ENCODE measurements at regions of chr4 and their contacts with region 1.

Region 1: GRCh38 chr4:26719954-26720552 is 136.2 kb downstream of the TBC1D19 start:
- DNase-seq: no peak
- H3K4me3 Mint-ChIP-seq: no peak overlapping the region
- H3K27ac Mint-ChIP-seq: no peak overlapping the region
- H3K4me1 Mint-ChIP-seq: no peaks in the 10 kb centered on the region
- H3K27me3 Mint-ChIP-seq: no peaks in the 10 kb centered on the region

Region 2: DNA sequence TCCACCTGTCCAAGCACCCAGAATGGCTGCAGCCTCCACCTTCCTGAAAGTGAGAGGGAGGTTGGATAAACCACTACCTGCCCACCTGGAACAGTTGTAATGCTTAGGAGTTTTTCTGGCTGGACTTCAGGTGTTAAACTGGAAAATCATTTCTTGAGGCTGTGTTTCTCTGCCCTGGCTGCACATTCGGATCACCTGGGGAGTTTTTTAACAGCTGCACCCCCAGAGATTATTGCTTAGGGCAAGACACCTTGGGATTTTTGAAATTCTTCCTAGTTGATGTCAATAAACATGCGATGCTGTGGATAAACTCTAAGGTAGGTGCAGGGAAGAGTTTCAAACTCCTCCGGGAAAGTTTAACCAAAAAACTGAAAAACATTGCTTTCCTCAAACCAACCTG is 1517.6 kb before region 1 on chr4:
- intact Hi-C with region 1: no loop called
- DNase-seq: no peak
- H3K4me3 Mint-ChIP-seq: no peak overlapping the region
- H3K27ac Mint-ChIP-seq: no peak overlapping the region
- H3K4me1 Mint-ChIP-seq: no peaks in the 10 kb centered on the region
- H3K27me3 Mint-ChIP-seq: no peaks in the 10 kb centered on the region

Region 3: DNA sequence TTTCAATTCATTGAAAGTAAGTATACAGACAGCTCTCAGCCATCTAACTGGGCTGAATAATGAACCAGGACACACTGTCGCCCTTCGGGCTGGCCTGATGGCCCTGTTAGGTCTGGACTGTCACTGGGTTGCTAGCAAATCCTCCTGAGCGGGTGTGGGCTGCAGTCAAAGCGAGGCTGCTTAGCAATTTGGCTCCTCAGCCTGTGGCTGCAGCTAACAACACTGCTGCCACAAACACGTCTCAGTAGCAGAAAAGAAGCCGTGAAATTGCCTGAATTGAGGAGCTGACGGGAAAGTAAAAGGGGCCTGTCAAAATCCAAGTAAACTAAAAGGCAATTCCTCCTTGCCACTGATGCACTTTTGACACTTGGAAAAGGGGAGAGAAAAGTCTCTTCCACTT is 733.2 kb before region 1 on chr4:
- intact Hi-C with region 1: loop called (anchors 5 kb)
- DNase-seq: no peak
- H3K4me3 Mint-ChIP-seq: no peak overlapping the region
- H3K27ac Mint-ChIP-seq: no peak overlapping the region
- H3K4me1 Mint-ChIP-seq: peaks cover 10% of the 10 kb centered on the region
- H3K27me3 Mint-ChIP-seq: no peaks in the 10 kb centered on the region

Region 4: GRCh38 chr4:26022346-26023202 is 697.5 kb before region 1 on chr4:
- intact Hi-C with region 1: loop called (anchors 5 kb)
- DNase-seq: no peak
- H3K4me3 Mint-ChIP-seq: no peak overlapping the region
- H3K27ac Mint-ChIP-seq: no peak overlapping the region
- H3K4me1 Mint-ChIP-seq: peaks cover 31% of the 10 kb centered on the region
- H3K27me3 Mint-ChIP-seq: peaks cover 2% of the 10 kb centered on the region

Region 5: DNA sequence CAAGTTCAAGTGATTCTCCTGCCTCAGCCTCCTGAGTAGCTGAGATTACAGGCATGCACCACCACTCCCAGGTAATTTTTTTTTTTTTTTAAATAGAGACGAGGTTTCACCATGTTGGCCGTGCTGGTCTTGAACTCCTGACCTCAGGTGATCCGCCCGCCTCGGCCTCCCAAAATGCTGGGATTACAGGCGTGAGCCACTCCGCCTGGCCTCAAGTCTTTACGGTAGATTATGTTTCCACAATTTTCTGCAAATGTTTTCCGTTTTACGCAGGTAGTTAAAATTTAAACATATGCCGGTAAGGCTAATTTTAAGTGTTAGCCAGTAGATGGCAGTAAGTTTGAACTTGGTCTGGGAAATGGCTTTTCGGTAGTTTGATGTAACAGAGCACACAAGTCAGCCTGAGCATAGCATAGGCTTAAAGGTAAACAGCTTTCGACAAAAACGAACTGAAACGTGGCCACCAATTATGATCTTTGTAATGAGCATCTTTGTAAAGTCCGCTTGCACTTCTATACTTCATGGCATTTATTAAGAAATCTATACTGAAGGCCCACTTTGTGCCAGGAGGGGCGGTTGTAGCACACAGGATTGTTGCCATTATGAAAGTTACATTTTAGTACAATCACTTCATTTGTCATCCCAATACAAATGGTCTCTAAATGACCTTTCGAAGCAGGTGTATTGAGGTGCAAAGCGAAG is 260.8 kb before region 1 on chr4:
- intact Hi-C with region 1: loop called (anchors 2 kb)
- DNase-seq: no peak
- H3K4me3 Mint-ChIP-seq: no peak overlapping the region
- H3K27ac Mint-ChIP-seq: no peak overlapping the region
- H3K4me1 Mint-ChIP-seq: peaks cover 12% of the 10 kb centered on the region
- H3K27me3 Mint-ChIP-seq: peaks cover 11% of the 10 kb centered on the region

Region 6: DNA sequence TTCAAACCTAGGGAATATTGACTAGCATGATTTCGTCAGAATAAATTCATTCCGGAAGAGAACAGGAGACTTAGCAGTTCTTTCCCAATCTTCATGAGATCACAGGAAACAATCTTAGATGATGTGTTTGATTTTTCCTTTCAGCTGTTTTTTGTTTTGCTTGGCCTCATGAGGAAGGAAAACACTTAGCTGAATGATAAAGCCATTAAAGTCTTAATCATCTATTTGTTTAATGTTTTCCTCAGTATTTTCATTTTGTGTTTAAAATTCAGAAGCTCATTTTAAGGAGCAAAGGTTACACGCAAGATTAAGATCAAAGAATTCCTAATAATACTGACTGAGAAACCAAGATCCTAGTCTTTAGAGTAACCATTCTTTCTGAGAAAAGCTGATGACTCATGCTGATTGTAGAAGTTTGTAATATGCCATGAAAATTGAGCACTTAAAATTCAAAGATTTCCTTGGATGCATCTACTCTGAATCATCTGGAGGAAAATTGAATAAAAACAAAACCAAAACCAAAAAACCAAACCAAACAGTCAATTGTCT is 151.5 kb before region 1 on chr4:
- intact Hi-C with region 1: loop called (anchors 10 kb)
- DNase-seq: no peak
- H3K4me3 Mint-ChIP-seq: no peak overlapping the region
- H3K27ac Mint-ChIP-seq: peak overlapping the region; percentile 33
- H3K4me1 Mint-ChIP-seq: peaks cover 23% of the 10 kb centered on the region
- H3K27me3 Mint-ChIP-seq: peaks cover 5% of the 10 kb centered on the region